ENCODE measurements at regions of chr6 and their contacts with region 1.

Region 1: DNA sequence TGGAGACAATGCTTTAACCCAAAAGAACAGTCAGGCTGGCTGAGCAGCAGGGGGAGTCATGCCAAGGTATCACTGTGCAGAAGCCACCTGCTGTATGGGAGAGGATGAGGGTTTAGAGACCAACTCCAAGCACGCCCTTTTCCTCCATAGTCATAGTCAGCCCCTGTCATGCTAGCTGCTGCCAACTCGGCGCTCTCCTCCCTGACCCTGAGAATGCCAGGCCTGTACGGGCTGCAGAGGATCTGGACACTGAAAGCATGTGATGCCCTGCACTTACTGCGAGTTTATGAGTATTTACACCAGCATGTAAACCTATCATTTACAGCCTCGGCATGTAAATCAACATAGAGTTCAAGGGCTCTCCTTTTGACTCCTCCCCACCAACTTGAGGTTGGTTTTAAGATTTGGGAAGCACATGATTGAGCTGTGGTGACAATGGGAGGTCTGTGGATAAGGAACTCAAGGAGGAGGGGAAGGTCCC is 11.7 kb upstream of the SCUBE3 start:
- H3K4me3 ChIP-seq: no peak overlapping the region
- H3K27ac ChIP-seq: no peak overlapping the region
- H3K4me1 ChIP-seq: 0 out of 2 replicates have a peak, but pooled peaks cover 2% of the 10 kb centered on the region
- CTCF ChIP-seq: peak; percentile 81

Region 2: GRCh38 chr6:35139908-35140655 is 62.0 kb before region 1 on chr6:
- CTCF ChIA-PET with region 1: interaction called, 209 read pairs
- POLR2A ChIA-PET with region 1: interaction called, 6 read pairs
- H3K4me3 ChIP-seq: no peak overlapping the region
- H3K27ac ChIP-seq: no peak overlapping the region
- H3K4me1 ChIP-seq: peaks cover 2% of the 10 kb centered on the region; the same call in 1 of the 2 replicates
- CTCF ChIP-seq: peak; percentile 70

Region 3: DNA sequence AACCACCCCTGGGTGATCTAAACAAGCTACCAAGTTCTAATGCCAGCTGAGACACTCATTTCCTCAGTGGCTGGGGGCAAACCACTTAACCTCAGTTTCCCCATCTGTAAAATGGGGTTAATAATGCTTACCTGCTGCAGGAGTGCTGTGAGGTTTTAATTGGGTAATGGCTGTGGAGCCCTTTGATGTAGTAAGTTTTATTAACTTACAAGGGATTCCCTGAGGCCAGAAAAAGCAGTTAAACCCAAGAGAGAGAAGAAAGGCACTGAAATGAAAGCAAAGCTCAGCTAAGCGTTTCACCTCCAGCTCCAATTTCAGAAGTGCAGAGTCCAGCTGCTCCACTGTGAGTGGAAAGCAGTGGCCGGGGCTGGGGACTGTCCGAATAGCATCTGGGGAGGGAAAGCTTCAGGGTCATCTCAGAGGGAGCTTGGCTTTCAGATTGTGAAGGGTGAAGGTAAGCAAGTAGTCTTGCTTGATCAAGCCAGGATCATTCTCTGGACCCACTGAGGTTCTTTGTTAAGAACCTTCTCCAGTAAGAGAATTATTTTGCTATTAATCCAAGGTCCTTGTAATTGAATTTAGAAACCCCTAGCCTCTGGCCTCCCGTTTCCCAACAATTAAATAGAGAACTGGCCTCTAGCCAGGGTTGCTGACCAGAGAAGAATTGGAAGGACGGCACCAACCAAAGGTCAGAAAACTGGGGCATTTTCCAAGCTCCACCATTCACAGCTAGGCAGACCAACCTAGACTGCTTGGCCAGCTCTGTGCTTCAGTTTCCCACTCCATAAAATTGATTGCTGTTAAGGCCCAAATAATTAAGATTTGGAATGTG is 40.1 kb before region 1 on chr6:
- CTCF ChIA-PET with region 1: interaction called, 17 read pairs
- POLR2A ChIA-PET with region 1: no interaction called
- H3K4me3 ChIP-seq: no peak overlapping the region
- H3K27ac ChIP-seq: no peak overlapping the region
- H3K4me1 ChIP-seq: no peaks in the 10 kb centered on the region; the same call in 1 of the 2 replicates
- CTCF ChIP-seq: no peak

Region 4: GRCh38 chr6:35181933-35182612 is 20.0 kb before region 1 on chr6:
- CTCF ChIA-PET with region 1: interaction called, 15 read pairs
- POLR2A ChIA-PET with region 1: no interaction called
- H3K4me3 ChIP-seq: peak overlapping the region; percentile 9
- H3K27ac ChIP-seq: peak overlapping the region; percentile 40; the same call in 1 of the 2 replicates
- H3K4me1 ChIP-seq: peaks cover 8% of the 10 kb centered on the region
- CTCF ChIP-seq: no peak

Region 5: DNA sequence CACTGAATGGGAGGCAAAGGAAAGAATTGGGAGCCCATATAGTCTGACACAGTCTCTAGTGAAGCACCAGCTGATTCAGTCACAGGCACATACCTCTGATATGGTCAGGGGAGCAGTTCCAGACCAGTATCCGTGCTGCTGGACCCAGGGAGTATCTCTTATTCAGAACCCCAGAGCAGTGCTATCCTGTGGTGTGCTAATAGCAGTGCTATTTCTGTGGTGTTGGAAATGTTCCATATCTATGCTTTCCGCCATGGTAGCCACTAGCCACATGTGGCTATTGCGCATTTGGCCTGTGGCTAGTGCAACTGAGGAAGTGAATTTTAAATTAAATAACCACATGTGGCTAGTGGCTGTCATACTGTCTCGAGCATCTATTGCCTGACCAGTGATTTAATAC is 22.6 kb after region 1 on chr6:
- CTCF ChIA-PET with region 1: interaction called, 18 read pairs
- POLR2A ChIA-PET with region 1: no interaction called
- H3K4me3 ChIP-seq: no peak overlapping the region
- H3K27ac ChIP-seq: no peak overlapping the region
- H3K4me1 ChIP-seq: peaks cover 7% of the 10 kb centered on the region
- CTCF ChIP-seq: no peak

Region 6: DNA sequence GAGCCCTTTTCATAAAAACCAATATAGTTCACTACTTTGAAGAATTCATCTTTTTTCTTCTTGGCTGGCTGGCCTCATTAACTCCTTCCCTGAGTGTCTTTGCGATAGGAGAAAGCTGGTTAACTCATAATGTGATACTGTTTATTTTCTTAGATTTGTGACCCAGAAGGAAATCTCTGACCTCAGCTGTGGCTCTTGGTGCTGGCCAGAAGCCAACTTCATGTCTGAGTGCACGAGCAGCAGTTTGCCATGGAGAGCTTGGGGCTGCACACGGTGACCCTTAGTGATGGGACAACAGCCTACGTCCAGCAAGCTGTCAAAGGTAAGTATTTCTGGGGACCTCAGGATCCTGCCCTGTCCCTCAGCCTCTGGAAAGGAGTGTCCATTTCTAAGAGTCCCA is 78.8 kb after region 1 on chr6:
- CTCF ChIA-PET with region 1: no interaction called
- POLR2A ChIA-PET with region 1: no interaction called
- H3K4me3 ChIP-seq: no peak overlapping the region
- H3K27ac ChIP-seq: no peak overlapping the region
- H3K4me1 ChIP-seq: peaks cover 14% of the 10 kb centered on the region
- CTCF ChIP-seq: no peak

Region 7: GRCh38 chr6:35370124-35370741 is 168.1 kb after region 1 on chr6:
- CTCF ChIA-PET with region 1: no interaction called
- POLR2A ChIA-PET with region 1: no interaction called
- H3K4me3 ChIP-seq: no peak overlapping the region
- H3K27ac ChIP-seq: no peak overlapping the region
- H3K4me1 ChIP-seq: peaks cover 4% of the 10 kb centered on the region; the same call in 1 of the 2 replicates
- CTCF ChIP-seq: no peak

Region 8: DNA sequence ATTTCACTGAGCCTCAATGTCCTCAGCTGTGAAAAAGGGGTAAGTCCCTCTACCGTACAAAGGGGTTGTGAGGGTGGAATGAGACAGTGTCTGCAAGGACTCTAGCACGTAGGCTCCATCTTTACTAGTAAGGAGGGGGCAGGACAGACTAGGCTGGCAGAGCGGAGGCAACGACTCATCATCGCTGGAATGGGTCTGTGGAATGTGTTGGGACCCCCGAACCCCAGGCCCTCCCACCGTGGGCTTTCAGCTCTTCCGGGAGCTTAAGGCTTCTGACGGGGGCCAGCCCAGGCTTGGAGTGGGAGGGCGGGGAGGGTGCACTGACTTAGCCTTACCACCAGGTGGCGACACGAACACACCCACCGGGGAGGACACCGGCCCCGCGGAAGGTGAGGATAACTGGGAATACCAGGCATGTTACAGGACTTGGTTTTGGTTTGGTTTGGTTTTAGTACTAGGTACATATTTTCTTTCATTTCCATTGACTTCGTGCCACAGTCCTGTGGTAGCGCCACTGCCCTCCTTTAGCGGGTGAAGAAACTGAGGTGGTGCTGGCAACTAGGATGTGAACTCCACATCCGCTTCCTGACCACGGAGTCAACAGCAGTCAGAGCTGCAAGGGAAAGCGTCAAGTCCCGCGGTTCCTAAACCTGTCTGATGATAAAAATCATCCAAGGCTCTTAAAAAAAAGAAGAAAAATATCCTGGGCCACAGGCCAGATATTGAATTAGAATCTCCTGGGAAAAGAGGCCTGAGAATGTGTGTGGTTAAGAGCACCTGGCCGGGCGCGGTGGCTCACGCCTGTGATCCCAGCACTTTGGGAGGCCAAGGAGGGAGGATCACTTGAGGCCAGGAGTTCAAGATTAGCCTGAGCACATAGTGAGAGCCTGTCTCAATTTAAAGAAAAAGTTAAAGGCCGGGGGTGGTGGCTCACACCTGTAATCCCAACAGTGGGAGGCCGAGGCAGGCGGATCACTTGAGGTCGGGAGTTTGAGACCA is 320.9 kb after region 1 on chr6:
- CTCF ChIA-PET with region 1: no interaction called
- POLR2A ChIA-PET with region 1: no interaction called
- H3K4me3 ChIP-seq: no peak overlapping the region
- H3K27ac ChIP-seq: no peak overlapping the region
- H3K4me1 ChIP-seq: no peaks in the 10 kb centered on the region
- CTCF ChIP-seq: peak; percentile 84